ENCODE measurements at regions of chr16 and their contacts with region 1.

Region 1: DNA sequence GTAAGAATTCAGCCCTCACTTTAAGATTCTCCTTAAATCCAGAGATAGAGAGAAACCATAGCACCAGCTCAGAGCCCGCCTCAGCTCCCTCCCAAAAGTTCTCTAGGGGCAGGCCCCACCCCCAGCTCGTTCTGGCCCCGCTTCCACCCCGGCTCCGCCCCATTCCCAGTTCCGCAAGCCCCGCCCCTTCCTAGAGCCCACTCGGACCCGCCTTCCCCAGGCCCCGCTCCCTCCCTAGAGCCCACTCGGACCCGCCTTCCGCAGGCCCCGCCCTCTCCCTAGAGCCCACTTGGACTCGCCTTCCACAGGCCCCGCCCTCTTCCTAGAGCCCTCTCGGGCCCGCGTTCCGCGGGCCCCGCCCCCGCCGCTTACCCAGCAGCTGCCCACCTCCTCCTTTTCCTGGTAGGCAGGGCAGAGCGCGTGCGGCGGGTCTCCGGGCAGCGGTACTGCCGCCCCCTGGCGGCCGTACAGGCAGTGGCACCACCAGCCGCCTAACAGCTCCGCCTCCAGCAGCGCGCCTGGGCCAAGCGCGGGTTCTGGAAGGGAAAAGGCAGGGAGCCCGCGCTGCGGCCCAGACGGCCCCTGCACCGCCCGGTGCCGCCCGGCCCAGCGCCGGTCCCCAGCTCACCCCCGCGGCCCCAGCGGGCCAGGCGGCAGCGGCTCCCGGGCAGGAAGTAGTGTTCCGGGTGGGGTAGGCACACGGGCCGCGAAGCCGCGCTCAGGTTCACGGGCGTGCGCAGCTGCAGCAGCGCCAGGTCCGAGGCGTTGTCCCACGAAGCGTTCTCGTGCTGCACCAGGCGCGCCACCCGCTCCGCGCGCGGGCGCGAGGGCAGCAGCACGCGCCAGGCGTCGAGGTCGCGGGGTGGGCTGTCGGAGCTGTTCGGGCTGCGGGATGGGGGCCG is 6.8 kb upstream of the PRSS8 start:
- DNase-seq: peak; percentile 99
- H3K4me3 ChIP-seq: peak overlapping the region in 2 of 3 experiments; percentile 6 to 23
- H3K27ac ChIP-seq: peak overlapping the region; percentile 30
- H3K4me1 ChIP-seq: peaks cover 13% of the 10 kb centered on the region
- H3K27me3 ChIP-seq: peaks cover 5 to 13% of the 10 kb centered on the region in 2 experiments
- CTCF ChIP-seq: peak; percentile 98 to 99
- POLR2A ChIP-seq: peak; percentile 29

Region 2: DNA sequence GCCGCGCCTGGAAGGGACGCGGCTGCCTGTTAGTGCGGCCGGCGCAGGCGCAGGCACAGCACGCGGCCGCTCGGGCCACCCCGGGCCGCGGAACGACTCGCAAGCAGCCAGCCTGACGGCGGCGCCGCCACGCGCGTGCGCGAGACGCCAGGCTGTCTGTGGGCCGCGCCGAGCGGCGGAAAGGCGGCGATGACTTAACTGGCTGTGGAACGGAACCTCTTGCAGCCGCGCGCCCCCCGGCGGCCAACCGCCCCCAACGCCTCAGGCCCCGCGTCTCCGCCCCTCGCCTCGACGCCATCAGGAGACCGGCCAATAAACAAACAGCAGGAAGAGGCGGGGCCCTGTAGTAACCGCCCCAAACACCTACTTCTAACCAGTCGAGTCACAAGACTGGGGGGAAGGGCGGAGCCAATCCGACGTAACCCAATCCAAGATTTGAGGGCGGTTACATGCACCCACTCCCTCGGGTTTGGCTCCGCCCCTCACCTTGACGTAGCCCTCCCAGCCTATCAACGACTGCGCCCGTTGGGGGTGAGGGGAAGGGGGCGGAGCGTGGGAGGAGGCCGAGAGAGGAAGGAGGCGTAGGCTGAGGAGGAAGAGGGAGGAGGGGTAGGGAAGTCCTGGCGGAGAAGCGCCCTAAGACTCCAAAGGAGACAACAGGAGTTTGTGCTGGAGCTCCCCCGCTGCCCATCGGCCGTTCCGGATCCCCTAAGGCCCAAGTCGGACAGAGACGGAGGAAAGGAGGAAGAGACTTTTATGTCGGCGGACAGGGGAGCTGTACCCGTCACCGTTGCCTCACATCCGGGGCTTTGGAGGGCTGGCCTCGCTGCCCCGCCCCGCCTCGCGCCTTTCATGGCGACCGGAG is 484.3 kb before region 1 on chr16 and contains the start of gene FBRS:
- CTCF ChIA-PET with region 1: no interaction called
- POLR2A ChIA-PET with region 1: no interaction called
- dilution Hi-C with region 1: no loop called
- intact Hi-C with region 1: no loop called
- DNase-seq: peak; percentile 100
- H3K4me3 ChIP-seq: peak within 1 kb of the TSS; percentile 40 to 90 (median 59)
- H3K27ac ChIP-seq: peak within 1 kb of the TSS; percentile 96
- H3K4me1 ChIP-seq: peaks cover 21% of the 10 kb centered on the region
- H3K27me3 ChIP-seq: no peaks in the 10 kb centered on the region
- CTCF ChIP-seq: peak; percentile 91 to 98
- POLR2A ChIP-seq: peak; percentile 87
- total RNA-seq, gene FBRS: 68.6 and 72.5 TPM in 2 replicates

Region 3: GRCh38 chr16:30984669-30985400 is 157.5 kb before region 1 on chr16 and contains the start of gene HSD3B7:
- CTCF ChIA-PET with region 1: interaction called, 31 read pairs
- POLR2A ChIA-PET with region 1: no interaction called
- dilution Hi-C with region 1: no loop called
- intact Hi-C with region 1: loop called (anchors 1 kb)
- DNase-seq: peak; percentile 69
- H3K4me3 ChIP-seq: peak within 1 kb of the TSS in 1 of 3 experiments; percentile 19
- H3K27ac ChIP-seq: no peak within 1 kb of the TSS
- H3K4me1 ChIP-seq: no peaks in the 10 kb centered on the region
- H3K27me3 ChIP-seq: no peaks in the 10 kb centered on the region
- CTCF ChIP-seq: peak; percentile 93 to 97
- POLR2A ChIP-seq: no peak
- total RNA-seq, gene HSD3B7: 2.9 and 3.5 TPM in 2 replicates

Region 4: GRCh38 chr16:31050280-31051030 is 91.9 kb before region 1 on chr16:
- CTCF ChIA-PET with region 1: no interaction called
- POLR2A ChIA-PET with region 1: no interaction called
- dilution Hi-C with region 1: no loop called
- intact Hi-C with region 1: no loop called
- DNase-seq: no peak
- H3K4me3 ChIP-seq: no peak overlapping the region
- H3K27ac ChIP-seq: no peak overlapping the region
- H3K4me1 ChIP-seq: peaks cover 2% of the 10 kb centered on the region
- H3K27me3 ChIP-seq: no peaks in the 10 kb centered on the region
- CTCF ChIP-seq: no peak
- POLR2A ChIP-seq: no peak

Region 5: GRCh38 chr16:31094424-31095120 is 47.8 kb before region 1 on chr16 and contains the start of gene VKORC1:
- CTCF ChIA-PET with region 1: interaction called, 12 read pairs
- POLR2A ChIA-PET with region 1: no interaction called
- dilution Hi-C with region 1: no loop called
- intact Hi-C with region 1: loop called (anchors 1 kb)
- DNase-seq: peak; percentile 97
- H3K4me3 ChIP-seq: peak within 1 kb of the TSS; percentile 28 to 91 (median 62)
- H3K27ac ChIP-seq: peak within 1 kb of the TSS; percentile 6
- H3K4me1 ChIP-seq: peaks cover 3% of the 10 kb centered on the region
- H3K27me3 ChIP-seq: no peaks in the 10 kb centered on the region
- CTCF ChIP-seq: no peak
- POLR2A ChIP-seq: peak; percentile 64
- total RNA-seq, gene VKORC1: 91.8 and 93.5 TPM in 2 replicates

Region 6: DNA sequence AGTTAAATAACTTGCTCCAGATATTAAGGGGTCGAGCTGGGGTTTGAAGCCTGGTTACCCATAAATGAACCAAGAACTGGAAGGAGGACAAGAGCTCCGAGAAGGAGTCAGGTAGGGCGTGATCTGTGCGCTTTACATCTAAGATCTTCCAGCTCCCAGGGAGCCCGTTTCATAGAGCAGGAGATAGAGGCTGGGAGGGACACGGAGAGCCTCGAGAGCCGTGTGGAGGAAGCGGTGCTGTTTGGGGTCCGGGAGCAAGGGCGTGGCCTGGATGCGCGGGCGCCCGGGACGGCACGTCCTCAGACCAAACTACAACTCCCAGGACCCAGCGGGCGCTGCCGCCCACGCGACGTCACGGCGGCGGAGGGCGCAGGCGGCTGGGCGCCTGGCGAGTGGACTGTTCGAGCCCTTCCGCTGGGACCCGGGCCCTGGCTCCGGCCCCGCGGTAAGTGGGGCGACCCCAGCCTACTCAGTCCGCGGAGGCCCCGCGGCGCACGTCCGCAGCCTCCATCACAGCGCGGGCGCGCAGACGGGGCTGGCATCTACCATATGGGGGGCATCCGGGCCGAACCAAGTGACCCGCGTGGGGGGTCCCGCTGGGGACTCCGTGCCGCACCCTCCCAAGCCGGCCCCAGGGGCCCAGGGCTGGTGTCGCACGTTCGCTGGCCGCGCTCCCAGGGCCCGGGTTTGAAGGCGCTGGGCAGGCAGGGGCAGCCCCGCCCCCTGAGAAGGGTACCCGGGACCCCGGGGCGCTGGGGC is 34.1 kb before region 1 on chr16 and contains the start of gene BCKDK:
- CTCF ChIA-PET with region 1: interaction called, 5 read pairs
- POLR2A ChIA-PET with region 1: no interaction called
- dilution Hi-C with region 1: no loop called
- intact Hi-C with region 1: loop called (anchors 5 kb)
- DNase-seq: peak; percentile 65
- H3K4me3 ChIP-seq: peak within 1 kb of the TSS; percentile 63 to 98 (median 66)
- H3K27ac ChIP-seq: peak within 1 kb of the TSS; percentile 53
- H3K4me1 ChIP-seq: peaks cover 12% of the 10 kb centered on the region
- H3K27me3 ChIP-seq: no peaks in the 10 kb centered on the region
- CTCF ChIP-seq: no peak
- POLR2A ChIP-seq: peak; percentile 72
- total RNA-seq, gene BCKDK: 56.5 and 57.8 TPM in 2 replicates

Region 7: DNA sequence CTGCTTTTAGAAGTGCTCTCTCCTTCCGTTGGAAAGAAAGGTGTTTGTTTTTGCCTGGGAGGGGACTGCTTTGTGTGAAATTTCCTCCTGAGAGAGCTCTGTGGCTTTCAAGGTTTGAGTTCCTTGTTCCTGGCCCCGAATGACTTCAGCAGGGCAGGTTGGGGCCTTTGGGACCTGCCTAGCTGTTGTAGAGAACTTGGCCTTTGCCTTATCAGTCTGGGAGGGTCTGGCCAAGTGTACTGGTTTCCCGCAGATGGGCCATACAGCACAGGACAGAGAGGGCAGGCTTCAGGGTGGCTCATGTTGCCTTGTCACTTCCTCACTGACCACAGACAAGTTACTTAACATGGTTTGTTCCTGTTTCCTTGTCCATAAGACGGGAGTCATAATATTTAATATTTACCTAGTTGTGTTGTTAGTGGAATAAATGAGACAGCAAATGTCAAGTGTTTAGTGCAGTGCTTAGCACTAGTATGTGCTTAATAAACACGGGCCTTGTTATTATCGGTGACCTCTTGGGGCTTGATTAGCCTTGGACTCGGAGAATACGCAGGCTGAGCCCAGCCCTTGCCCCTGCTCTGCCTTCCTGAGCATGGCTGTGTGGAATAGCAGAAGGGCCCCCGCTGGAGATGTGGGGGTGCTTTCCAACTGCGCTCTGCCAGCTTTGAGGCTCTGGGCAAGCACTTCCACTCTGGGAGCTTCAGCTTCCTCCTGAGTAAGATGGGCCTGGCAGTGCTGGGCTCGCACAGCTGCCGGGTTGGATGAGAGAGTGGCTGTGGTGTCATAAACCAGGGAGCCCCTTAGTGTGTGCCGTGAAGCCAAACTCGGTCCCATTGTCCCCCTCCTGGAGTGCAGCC is 13.4 kb before region 1 on chr16:
- CTCF ChIA-PET with region 1: interaction called, 13 read pairs
- POLR2A ChIA-PET with region 1: no interaction called
- dilution Hi-C with region 1: no loop called
- intact Hi-C with region 1: no loop called
- DNase-seq: no peak
- H3K4me3 ChIP-seq: no peak overlapping the region
- H3K27ac ChIP-seq: no peak overlapping the region
- H3K4me1 ChIP-seq: no peaks in the 10 kb centered on the region
- H3K27me3 ChIP-seq: no peaks in the 10 kb centered on the region
- CTCF ChIP-seq: no peak
- POLR2A ChIP-seq: no peak

Region 8: DNA sequence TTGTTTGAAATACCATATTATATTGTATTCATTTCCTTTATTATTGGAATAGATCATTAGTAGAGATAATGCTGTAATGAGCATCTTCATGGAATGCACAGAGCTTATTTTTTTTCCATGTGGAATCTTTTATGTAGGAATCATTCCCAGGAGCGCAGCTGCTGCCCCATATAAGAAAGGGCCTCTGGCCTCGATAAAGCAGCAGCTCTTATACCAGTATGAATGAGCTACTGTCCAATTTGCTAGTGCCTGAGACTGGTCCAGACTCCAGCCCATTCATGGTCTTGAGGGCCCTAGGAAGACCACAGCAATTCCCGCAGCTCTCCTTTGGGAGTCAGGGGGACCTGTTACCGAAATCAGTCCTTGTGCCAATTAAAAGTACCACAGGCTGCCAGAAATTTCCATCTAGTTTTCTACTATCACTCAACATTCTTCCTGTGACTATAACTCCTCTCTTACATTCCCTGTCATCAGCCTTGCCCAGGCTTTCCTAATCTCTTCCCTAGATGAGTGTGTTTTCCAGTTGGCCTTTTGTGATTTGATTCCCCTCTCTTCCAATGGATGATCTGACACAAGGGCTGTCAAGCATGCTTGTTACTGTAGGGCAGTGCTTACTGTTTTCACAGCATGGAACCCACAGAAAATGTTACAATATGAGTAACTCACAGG is 298.3 kb after region 1 on chr16:
- CTCF ChIA-PET with region 1: interaction called, 12 read pairs
- POLR2A ChIA-PET with region 1: no interaction called
- dilution Hi-C with region 1: no loop called
- intact Hi-C with region 1: no loop called
- DNase-seq: no peak
- H3K4me3 ChIP-seq: no peak overlapping the region
- H3K27ac ChIP-seq: no peak overlapping the region
- H3K4me1 ChIP-seq: no peaks in the 10 kb centered on the region
- H3K27me3 ChIP-seq: peaks cover 3 to 11% of the 10 kb centered on the region in 2 experiments
- CTCF ChIP-seq: no peak
- POLR2A ChIP-seq: no peak

Measured in endothelial cell of umbilical vein (primary cell).